Ovary (tissue), 10 donors: ENCODE measurements at regions of chr11 and their contacts with region 1.

Region 1: GRCh38 chr11:57530596-57531507 is at the start of gene TIMM10:
- DNase-seq: peak; percentile 93 to 95 (median 93)
- H3K4me3 ChIP-seq: peak within 1 kb of the TSS; percentile 63
- H3K27ac ChIP-seq: peak within 1 kb of the TSS in 1 of 2 donors; percentile 3
- H3K4me1 ChIP-seq: peaks cover 4% of the 10 kb centered on the region
- H3K27me3 ChIP-seq: no peaks in the 10 kb centered on the region
- CTCF ChIP-seq: no peak
- EP300 ChIP-seq: no peak
- POLR2A ChIP-seq: no peak
- total RNA-seq, gene TIMM10: 23.4 to 42.0 (median 38.0) TPM

Region 2: DNA sequence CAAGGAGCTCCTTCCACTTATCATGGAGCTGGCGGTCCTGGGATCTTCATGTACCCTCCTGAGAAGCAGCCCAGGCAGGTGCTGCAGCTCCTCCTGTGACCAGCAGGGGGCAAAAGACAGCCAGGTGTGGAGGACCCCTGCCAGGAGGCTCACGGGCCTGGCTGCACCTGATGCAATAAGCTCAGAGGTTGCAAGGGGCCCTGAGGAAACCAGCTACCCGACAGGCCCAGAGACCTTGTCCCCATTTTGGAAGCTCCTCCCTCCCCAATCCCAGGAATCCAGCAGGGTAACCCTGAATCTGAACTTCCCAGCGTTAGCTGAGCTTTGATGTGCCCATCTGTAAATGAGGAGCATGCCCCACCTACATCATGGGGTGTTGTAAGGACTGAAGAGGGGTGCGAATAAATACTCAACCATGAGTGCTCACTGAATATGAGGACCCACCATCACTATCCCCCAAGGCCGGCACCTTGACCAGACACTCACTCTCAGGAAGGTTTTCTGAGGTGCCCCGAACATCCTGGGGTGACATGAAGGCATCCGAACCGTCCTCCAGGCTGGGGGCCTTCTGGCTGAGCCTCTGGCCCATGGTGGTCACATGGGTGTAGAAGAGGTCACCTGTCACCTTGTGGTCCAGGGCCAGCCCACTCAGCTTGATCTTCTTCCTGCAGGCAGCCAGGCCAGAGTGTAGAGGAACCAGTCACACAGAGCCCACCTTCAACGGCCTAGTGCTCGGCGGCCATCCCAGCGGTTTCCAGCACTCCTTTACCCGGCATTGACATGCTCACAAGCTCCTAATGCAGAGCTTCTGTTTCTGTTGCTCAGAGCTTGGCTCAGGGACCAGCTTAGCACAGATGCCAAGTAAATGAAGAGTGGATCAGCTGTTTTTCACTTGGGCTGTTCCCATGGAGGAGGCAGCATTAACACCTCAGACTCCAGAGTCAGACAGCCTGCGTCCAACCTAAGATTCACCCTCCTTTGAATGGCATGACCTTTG is 37.0 kb before region 1 on chr11:
- intact Hi-C with region 1: loop called in 3 of 4 experiments (anchors 2 kb)
- DNase-seq: peak; percentile 54 to 74 (median 68)
- H3K4me3 ChIP-seq: no peak overlapping the region
- H3K27ac ChIP-seq: no peak overlapping the region
- H3K4me1 ChIP-seq: no peaks in the 10 kb centered on the region
- H3K27me3 ChIP-seq: no peaks in the 10 kb centered on the region
- CTCF ChIP-seq: peak; percentile 64 to 69 (median 64)
- EP300 ChIP-seq: no peak
- POLR2A ChIP-seq: no peak

Region 3: GRCh38 chr11:57499983-57500461 is 30.8 kb before region 1 on chr11:
- intact Hi-C with region 1: loop called in 1 of 4 experiments (anchors 2 kb)
- DNase-seq: no peak
- H3K4me3 ChIP-seq: peak overlapping the region; percentile 35
- H3K27ac ChIP-seq: peak overlapping the region; percentile 26 to 82
- H3K4me1 ChIP-seq: peaks cover 15% of the 10 kb centered on the region
- H3K27me3 ChIP-seq: no peaks in the 10 kb centered on the region
- CTCF ChIP-seq: no peak
- EP300 ChIP-seq: no peak
- POLR2A ChIP-seq: no peak

Region 4: GRCh38 chr11:57552479-57552878 is 21.6 kb after region 1 on chr11:
- intact Hi-C with region 1: no loop called
- DNase-seq: no peak
- H3K4me3 ChIP-seq: no peak overlapping the region
- H3K27ac ChIP-seq: no peak overlapping the region
- H3K4me1 ChIP-seq: peaks cover 6% of the 10 kb centered on the region
- H3K27me3 ChIP-seq: no peaks in the 10 kb centered on the region
- CTCF ChIP-seq: no peak
- EP300 ChIP-seq: no peak
- POLR2A ChIP-seq: no peak